ENCODE measurements at regions of chr6 and their contacts with region 1.

Region 1: GRCh38 chr6:5553767-5554166 is 292.5 kb downstream of the FARS2 start:
- DNase-seq: no peak
- ATAC-seq: no peak
- H3K4me3 ChIP-seq: no peak overlapping the region
- H3K27ac ChIP-seq: no peak overlapping the region
- H3K4me1 ChIP-seq: no peaks in the 10 kb centered on the region
- H3K27me3 ChIP-seq: no peaks in the 10 kb centered on the region

Region 2: GRCh38 chr6:5379647-5380242 is 174.0 kb before region 1 on chr6:
- intact Hi-C with region 1: no loop called
- DNase-seq: no peak
- ATAC-seq: no peak
- H3K4me3 ChIP-seq: no peak overlapping the region
- H3K27ac ChIP-seq: no peak overlapping the region
- H3K4me1 ChIP-seq: no peaks in the 10 kb centered on the region
- H3K27me3 ChIP-seq: no peaks in the 10 kb centered on the region

Region 3: DNA sequence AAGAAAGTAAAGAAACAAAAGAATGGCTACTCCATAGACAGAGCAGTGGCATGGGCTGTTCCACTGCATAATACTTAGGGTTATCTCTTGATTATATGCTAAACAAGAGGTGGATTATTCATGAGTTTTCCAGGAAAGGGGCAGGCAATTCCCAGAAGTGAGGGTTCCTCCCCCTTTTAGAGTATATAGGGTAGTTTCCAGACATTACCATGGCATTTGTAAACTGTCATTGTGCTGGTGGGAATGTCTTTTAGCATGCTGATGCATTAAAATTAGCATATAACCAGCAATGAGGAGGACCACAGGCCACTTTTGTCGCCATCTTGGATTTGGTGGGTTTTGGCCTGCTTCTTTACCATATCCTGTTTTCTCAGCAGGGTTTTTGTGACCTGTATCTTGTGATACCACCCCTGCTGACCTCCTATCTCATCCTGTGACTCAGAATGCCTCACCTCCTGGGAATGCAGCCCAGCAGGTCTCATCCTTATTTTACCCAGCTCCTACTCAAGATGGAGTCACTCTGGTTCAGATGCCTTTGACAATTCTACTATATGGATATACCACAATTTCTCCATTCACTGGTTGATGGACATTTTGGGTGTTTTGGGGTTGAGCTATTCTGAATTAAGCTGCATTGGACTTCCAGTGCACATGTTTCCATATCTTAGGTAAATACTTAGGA is 11.9 kb before region 1 on chr6:
- intact Hi-C with region 1: loop called in 1 of 2 experiments (anchors 1 kb)
- DNase-seq: no peak
- ATAC-seq: no peak
- H3K4me3 ChIP-seq: no peak overlapping the region
- H3K27ac ChIP-seq: no peak overlapping the region
- H3K4me1 ChIP-seq: no peaks in the 10 kb centered on the region
- H3K27me3 ChIP-seq: no peaks in the 10 kb centered on the region

Measured in aorta (tissue), 5 donors.